ENCODE measurements at regions of chr5 and their contacts with region 1.

Region 1: DNA sequence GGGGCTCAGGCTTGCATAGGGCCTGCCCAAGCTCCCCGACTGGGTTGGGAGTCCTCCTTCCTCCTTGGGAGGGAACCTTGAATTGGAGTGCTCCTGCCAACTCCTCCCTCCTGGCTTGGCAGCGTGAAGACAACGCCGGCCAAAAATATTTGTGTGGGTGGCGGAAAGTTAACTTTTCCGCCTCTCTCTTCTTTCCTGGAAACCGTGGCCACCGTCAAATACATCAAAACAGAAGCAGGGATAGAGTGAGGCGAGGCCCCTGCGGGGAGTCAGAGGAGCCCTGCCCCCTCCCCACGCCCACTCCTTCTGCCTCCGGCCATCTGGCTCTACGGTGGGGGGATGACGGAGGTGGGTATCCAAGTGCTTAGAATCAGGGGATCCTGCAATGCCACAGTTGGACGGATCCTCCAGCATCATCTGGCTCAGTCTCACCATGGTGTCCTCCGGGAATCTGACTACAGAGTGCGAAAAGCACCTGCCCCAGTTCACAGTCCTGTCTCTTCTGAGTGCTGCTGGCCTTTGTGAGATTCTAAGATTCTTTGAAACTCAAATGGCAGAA is 25.2 kb upstream of the SYNPO start:
- DNase-seq: no peak
- H3K4me3 ChIP-seq: no peak overlapping the region
- H3K27ac ChIP-seq: no peak overlapping the region
- H3K4me1 ChIP-seq: peaks cover 0 to 16% (median 9%) of the 10 kb centered on the region in 4 experiments; a peak in 4 of 7 replicates
- H3K27me3 ChIP-seq: no peaks in the 10 kb centered on the region; a peak in 2 of 7 replicates
- CTCF ChIP-seq: no peak
- EP300 ChIP-seq: no peak
- POLR2A ChIP-seq: no peak
- RAD21 ChIP-seq: no peak

Region 2: GRCh38 chr5:150573867-150574817 is 41.1 kb before region 1 on chr5:
- CTCF ChIA-PET with region 1: interaction called, 30 read pairs
- POLR2A ChIA-PET with region 1: no interaction called
- DNase-seq: no peak
- H3K4me3 ChIP-seq: no peak overlapping the region
- H3K27ac ChIP-seq: no peak overlapping the region
- H3K4me1 ChIP-seq: no peaks in the 10 kb centered on the region
- H3K27me3 ChIP-seq: no peaks in the 10 kb centered on the region
- CTCF ChIP-seq: peak; percentile 22 to 60 (median 43)
- EP300 ChIP-seq: no peak
- POLR2A ChIP-seq: no peak
- RAD21 ChIP-seq: no peak; a peak in 1 of 4 replicates

Region 3: GRCh38 chr5:150589871-150590601 is 25.2 kb before region 1 on chr5:
- CTCF ChIA-PET with region 1: interaction called, 39 read pairs
- POLR2A ChIA-PET with region 1: interaction called, 3 read pairs
- DNase-seq: peak in 1 of 2 experiments; percentile 17
- H3K4me3 ChIP-seq: no peak overlapping the region
- H3K27ac ChIP-seq: no peak overlapping the region
- H3K4me1 ChIP-seq: peaks cover 0 to 7% (median 5%) of the 10 kb centered on the region in 4 experiments; a peak in 6 of 7 replicates
- H3K27me3 ChIP-seq: no peaks in the 10 kb centered on the region
- CTCF ChIP-seq: peak; percentile 61 to 69 (median 63)
- EP300 ChIP-seq: no peak
- POLR2A ChIP-seq: no peak
- RAD21 ChIP-seq: peak; percentile 60 to 70

Region 4: GRCh38 chr5:150640311-150641005 is 25.2 kb after region 1 on chr5 and contains the start of gene SYNPO:
- CTCF ChIA-PET with region 1: interaction called, 10 read pairs
- POLR2A ChIA-PET with region 1: no interaction called
- DNase-seq: no peak
- H3K4me3 ChIP-seq: no peak within 1 kb of the TSS
- H3K27ac ChIP-seq: no peak within 1 kb of the TSS
- H3K4me1 ChIP-seq: peaks cover 0 to 26% (median 15%) of the 10 kb centered on the region in 4 experiments; a peak in 6 of 7 replicates
- H3K27me3 ChIP-seq: no peaks in the 10 kb centered on the region
- CTCF ChIP-seq: no peak
- EP300 ChIP-seq: no peak
- POLR2A ChIP-seq: no peak
- RAD21 ChIP-seq: no peak
- total RNA-seq, gene SYNPO: 1.9 and 2.3 TPM in 2 replicates

Region 5: DNA sequence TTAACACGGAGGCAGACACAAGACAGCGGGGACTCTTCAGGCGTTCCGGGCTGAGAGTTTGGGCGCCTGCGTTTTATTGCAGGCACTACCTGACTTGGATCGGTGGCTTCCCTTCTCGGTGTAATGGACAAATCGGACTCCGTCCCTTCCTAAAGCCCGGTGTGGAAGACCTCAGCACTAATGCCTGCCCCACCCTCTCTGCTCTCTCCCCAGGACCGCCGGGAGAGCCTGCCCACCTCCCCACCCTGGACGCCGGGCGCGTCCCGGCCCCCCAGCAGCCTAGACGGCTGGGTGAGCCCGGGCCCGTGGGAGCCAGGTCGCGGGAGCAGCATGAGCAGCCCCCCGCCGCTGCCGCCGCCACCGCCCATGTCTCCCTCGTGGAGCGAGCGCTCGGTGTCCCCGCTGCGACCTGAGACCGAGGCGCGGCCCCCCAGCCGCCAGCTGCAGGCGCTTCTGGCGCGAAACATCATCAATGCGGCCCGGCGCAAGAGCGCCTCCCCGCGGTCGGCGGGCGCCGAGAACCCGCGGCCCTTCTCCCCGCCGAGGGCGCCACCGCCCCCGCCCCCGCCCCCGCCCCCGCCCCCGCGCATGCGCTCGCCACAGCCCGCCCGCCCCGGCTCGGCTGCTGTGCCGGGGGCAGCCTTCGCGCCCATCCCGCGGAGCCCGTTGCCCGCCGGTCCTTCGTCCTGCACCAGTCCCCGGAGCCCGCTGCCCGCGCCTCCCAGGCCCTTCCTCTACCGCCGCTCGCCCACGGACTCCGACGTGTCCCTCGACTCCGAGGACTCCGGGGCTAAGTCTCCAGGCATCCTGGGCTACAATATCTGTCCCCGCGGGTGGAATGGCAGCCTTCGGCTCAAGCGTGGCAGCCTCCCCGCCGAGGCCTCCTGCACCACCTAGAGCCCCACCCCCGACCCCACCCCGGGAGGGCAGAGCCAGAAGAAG is 41.2 kb after region 1 on chr5:
- CTCF ChIA-PET with region 1: interaction called, 28 read pairs
- POLR2A ChIA-PET with region 1: interaction called, 4 read pairs
- DNase-seq: peak in 1 of 2 experiments; percentile 94
- H3K4me3 ChIP-seq: peak overlapping the region; percentile 44 to 78 (median 46)
- H3K27ac ChIP-seq: no peak overlapping the region; the same call in 1 of the 2 replicates
- H3K4me1 ChIP-seq: peaks cover 0 to 11% (median 3%) of the 10 kb centered on the region in 4 experiments; a peak in 4 of 7 replicates
- H3K27me3 ChIP-seq: no peaks in the 10 kb centered on the region; a peak in 1 of 7 replicates
- CTCF ChIP-seq: peak in 2 of 3 experiments; percentile 57 to 82; a peak in 3 of 4 replicates
- EP300 ChIP-seq: no peak
- POLR2A ChIP-seq: peak in 1 of 2 experiments; percentile 60; a peak in 2 of 3 replicates
- RAD21 ChIP-seq: peak; percentile 71 to 79